Activated CD4-positive, alpha-beta T cell treated with anti-CD3 and anti-CD28 coated beads for 36 hours (primary cell): ENCODE measurements at regions of chr20 and their contacts with region 1.

Region 1: GRCh38 chr20:57498425-57499400 is 26.2 kb downstream of the CTCFL start:
- DNase-seq: peak; percentile 75
- ATAC-seq: peak; percentile 95
- H3K4me3 Mint-ChIP-seq: no peak overlapping the region
- H3K27ac Mint-ChIP-seq: no peak overlapping the region
- H3K4me1 Mint-ChIP-seq: peaks cover 12% of the 10 kb centered on the region
- H3K27me3 Mint-ChIP-seq: peaks cover 31% of the 10 kb centered on the region

Region 2: DNA sequence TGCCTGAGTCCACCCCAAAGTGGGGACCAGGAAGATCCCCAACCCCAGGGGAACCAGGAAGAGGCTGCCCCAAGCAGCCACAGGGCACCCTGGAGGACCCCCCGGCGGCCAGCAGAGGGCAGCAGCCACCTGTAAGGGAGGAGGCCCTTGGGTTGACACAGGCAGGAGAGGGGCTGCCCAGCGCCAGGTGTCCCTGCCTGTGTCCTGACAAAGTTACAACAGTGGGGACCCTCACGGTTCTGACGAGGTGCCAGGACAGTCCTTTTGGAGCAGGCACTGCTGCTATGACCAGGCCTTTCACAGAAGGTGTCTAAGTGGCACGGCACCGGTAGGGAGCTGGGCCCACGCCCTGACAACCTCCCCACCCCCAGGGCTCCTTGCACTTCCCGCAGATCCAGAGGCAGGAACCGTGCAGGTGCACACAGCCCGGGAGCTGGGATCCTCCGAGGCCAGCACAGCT is 409.0 kb before region 1 on chr20:
- CTCF ChIA-PET with region 1: interaction called, 3 read pairs
- POLR2A ChIA-PET with region 1: no interaction called
- intact Hi-C with region 1: loop called in 1 of 2 experiments (anchors 1 kb)
- DNase-seq: peak; percentile 87
- ATAC-seq: peak; percentile 80
- H3K4me3 Mint-ChIP-seq: no peak overlapping the region
- H3K27ac Mint-ChIP-seq: no peak overlapping the region
- H3K4me1 Mint-ChIP-seq: peaks cover 15% of the 10 kb centered on the region
- H3K27me3 Mint-ChIP-seq: peaks cover 9% of the 10 kb centered on the region

Region 3: GRCh38 chr20:57329608-57330221 is 169.0 kb before region 1 on chr20 and contains the start of gene SPO11:
- CTCF ChIA-PET with region 1: no interaction called
- POLR2A ChIA-PET with region 1: no interaction called
- intact Hi-C with region 1: no loop called
- DNase-seq: peak; percentile 38
- ATAC-seq: no peak
- H3K4me3 Mint-ChIP-seq: no peak within 1 kb of the TSS
- H3K27ac Mint-ChIP-seq: no peak within 1 kb of the TSS
- H3K4me1 Mint-ChIP-seq: no peaks in the 10 kb centered on the region
- H3K27me3 Mint-ChIP-seq: peaks cover 25% of the 10 kb centered on the region
- total RNA-seq, gene SPO11: not detected

Region 4: GRCh38 chr20:57383447-57384347 is 115.0 kb before region 1 on chr20:
- CTCF ChIA-PET with region 1: interaction called, 21 read pairs
- POLR2A ChIA-PET with region 1: interaction called, 3 read pairs
- intact Hi-C with region 1: loop called (anchors 1 kb)
- DNase-seq: no peak
- ATAC-seq: no peak
- H3K4me3 Mint-ChIP-seq: no peak overlapping the region
- H3K27ac Mint-ChIP-seq: no peak overlapping the region
- H3K4me1 Mint-ChIP-seq: peaks cover 21% of the 10 kb centered on the region
- H3K27me3 Mint-ChIP-seq: no peaks in the 10 kb centered on the region

Region 5: DNA sequence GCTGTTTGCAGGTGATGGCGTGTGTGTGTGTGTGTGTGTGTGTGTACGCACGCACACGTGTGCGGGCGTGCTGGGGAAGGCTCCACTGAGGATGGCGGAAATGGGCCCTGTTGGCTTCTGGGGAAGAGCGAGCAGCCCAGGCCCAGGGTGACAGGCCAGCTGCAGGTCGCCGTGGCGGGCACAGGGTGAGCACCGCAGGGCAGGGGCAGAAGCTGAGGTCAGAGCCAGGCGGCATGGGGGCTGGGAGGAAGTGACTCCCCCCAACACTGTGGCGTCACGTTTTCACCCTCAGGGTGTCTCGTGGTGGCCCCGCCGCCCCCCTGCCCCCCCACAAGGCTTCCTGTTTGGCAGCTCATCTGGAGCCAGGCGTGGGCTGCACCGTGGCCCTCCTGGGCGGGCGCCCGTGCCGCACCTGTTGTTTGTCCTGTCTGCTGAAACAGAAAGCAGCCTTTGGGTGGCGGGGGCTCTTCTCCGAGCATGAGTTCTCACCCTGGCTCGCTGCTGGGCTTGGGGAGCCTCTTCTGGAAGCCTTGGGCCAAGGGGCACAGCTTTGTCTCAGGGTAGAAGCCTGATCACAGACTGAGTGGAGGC is 100.4 kb before region 1 on chr20:
- CTCF ChIA-PET with region 1: interaction called, 7 read pairs
- POLR2A ChIA-PET with region 1: no interaction called
- intact Hi-C with region 1: loop called in 1 of 2 experiments (anchors 5 kb)
- DNase-seq: peak; percentile 93
- ATAC-seq: peak; percentile 69
- H3K4me3 Mint-ChIP-seq: peak overlapping the region; percentile 74
- H3K27ac Mint-ChIP-seq: peak overlapping the region; percentile 99
- H3K4me1 Mint-ChIP-seq: peaks cover 92% of the 10 kb centered on the region
- H3K27me3 Mint-ChIP-seq: no peaks in the 10 kb centered on the region

Region 6: GRCh38 chr20:57412347-57413029 is 86.2 kb before region 1 on chr20:
- CTCF ChIA-PET with region 1: interaction called, 12 read pairs
- POLR2A ChIA-PET with region 1: no interaction called
- intact Hi-C with region 1: no loop called
- DNase-seq: peak; percentile 40
- ATAC-seq: peak; percentile 43
- H3K4me3 Mint-ChIP-seq: no peak overlapping the region
- H3K27ac Mint-ChIP-seq: no peak overlapping the region
- H3K4me1 Mint-ChIP-seq: peaks cover 3% of the 10 kb centered on the region
- H3K27me3 Mint-ChIP-seq: no peaks in the 10 kb centered on the region

Region 7: DNA sequence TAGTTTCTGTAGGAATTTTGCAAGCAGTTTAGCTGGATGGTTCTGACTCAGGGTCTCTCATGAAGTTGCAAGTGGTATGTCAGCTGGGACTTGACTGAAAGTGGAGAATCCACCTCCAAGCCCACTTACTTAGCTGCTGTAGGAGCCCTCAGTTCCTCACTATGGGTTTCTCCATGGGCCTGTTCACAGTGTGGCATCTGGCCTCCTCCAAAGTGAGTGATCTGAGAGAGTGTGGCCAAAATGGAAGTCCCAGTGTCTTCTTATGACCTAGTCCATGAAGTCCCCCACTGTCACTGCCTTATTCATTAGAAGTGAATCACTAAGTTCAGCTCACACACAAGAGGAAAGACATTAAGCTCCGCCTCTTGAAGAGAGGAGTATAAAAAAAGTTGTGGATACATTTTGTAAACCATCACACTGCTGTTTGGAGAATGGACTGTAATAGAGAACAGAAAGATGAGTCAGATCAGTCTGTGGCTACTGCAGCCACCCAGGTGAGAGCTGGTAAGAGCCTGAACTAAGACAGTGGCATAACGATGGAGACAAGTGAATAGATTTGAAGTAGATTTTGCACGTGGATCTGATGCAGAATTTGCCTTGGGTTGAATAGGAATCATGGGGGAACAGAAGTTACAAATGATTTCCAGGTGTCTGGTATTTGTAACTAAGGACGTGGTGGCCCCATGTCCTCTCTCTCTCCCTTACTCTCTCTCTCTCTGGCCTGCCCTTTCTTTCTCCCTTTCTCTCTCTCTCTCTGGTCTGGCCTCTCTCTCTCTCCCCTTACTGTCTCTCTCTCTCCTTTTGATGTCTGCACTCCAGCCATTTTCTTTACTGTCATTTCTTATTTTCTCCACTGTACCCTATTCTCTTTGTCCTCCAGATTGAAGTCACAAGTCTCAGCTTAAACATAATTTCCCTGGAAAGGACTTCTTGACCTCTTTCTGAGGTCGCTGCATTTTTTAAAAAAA is 1477.6 kb after region 1 on chr20:
- CTCF ChIA-PET with region 1: no interaction called
- POLR2A ChIA-PET with region 1: no interaction called
- intact Hi-C with region 1: no loop called
- DNase-seq: no peak
- ATAC-seq: no peak
- H3K4me3 Mint-ChIP-seq: no peak overlapping the region
- H3K27ac Mint-ChIP-seq: no peak overlapping the region
- H3K4me1 Mint-ChIP-seq: no peaks in the 10 kb centered on the region
- H3K27me3 Mint-ChIP-seq: no peaks in the 10 kb centered on the region